ENCODE measurements at regions of chr3 and their contacts with region 1.

Region 1: GRCh38 chr3:129942296-129942695 is 32.2 kb upstream of the TRH start:
- DNase-seq: peak; percentile 75
- H3K4me3 ChIP-seq: no peak overlapping the region
- H3K27ac ChIP-seq: no peak overlapping the region
- H3K4me1 ChIP-seq: no peaks in the 10 kb centered on the region
- H3K27me3 ChIP-seq: peaks cover 4 to 7% of the 10 kb centered on the region in 2 experiments
- CTCF ChIP-seq: peak; percentile 59 to 85
- POLR2A ChIP-seq: no peak

Region 2: DNA sequence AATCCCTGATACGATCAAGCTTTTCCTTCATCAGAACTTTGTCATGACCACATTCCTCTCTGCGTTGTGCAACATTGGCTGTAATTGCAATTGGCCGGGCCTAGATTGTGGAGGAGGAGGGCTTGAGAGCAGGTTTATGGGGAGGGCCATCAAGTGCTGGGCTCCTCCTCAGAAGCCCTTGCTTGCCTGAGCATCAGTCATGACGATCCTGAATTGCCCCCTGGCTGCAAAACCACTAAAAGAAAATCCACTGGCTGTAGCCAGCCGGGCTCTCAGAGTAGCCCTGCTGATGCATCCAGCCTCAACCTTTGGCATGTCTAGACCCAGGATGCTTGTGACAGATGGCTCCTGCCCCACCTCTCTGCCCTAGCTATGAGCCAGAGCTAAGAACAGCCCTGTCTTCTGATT is 18.8 kb after region 1 on chr3:
- CTCF ChIA-PET with region 1: interaction called, 17 read pairs
- POLR2A ChIA-PET with region 1: no interaction called
- dilution Hi-C with region 1: no loop called
- intact Hi-C with region 1: no loop called
- DNase-seq: no peak
- H3K4me3 ChIP-seq: no peak overlapping the region
- H3K27ac ChIP-seq: no peak overlapping the region
- H3K4me1 ChIP-seq: no peaks in the 10 kb centered on the region
- H3K27me3 ChIP-seq: peaks cover 2 to 3% of the 10 kb centered on the region in 2 experiments
- CTCF ChIP-seq: no peak
- POLR2A ChIP-seq: no peak

Region 3: DNA sequence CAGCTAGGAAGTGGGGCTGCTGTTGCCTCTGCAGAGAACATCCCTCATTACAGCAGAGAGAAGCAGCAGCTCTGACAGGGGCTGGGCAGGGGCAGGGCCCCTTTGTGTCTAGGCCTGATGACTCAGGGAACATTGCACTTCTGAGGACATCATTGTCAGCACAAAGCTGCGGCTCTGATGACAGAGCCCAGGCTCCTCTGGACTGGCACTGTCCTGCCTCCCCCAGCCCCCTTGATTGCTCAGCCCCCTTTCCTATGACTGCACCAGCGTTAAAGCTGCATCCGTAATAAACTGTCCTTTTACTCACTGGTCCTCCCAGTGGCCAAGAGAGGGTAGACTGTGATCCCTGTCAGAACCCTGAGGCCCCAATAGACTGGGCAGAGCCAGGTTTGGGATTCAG is 50.5 kb after region 1 on chr3:
- CTCF ChIA-PET with region 1: interaction called, 22 read pairs
- POLR2A ChIA-PET with region 1: no interaction called
- dilution Hi-C with region 1: no loop called
- intact Hi-C with region 1: no loop called
- DNase-seq: no peak
- H3K4me3 ChIP-seq: no peak overlapping the region
- H3K27ac ChIP-seq: no peak overlapping the region
- H3K4me1 ChIP-seq: no peaks in the 10 kb centered on the region
- H3K27me3 ChIP-seq: peaks cover 11 to 25% of the 10 kb centered on the region in 2 experiments
- CTCF ChIP-seq: peak in 1 of 2 donors; percentile 37
- POLR2A ChIP-seq: no peak

Region 4: GRCh38 chr3:130093741-130094391 is 151.6 kb after region 1 on chr3:
- CTCF ChIA-PET with region 1: interaction called, 103 read pairs
- POLR2A ChIA-PET with region 1: no interaction called
- dilution Hi-C with region 1: no loop called
- intact Hi-C with region 1: loop called (anchors 2 kb)
- DNase-seq: no peak
- H3K4me3 ChIP-seq: no peak overlapping the region
- H3K27ac ChIP-seq: no peak overlapping the region
- H3K4me1 ChIP-seq: no peaks in the 10 kb centered on the region
- H3K27me3 ChIP-seq: no peaks in the 10 kb centered on the region
- CTCF ChIP-seq: no peak
- POLR2A ChIP-seq: no peak

Region 5: GRCh38 chr3:130111185-130111864 is 169.0 kb after region 1 on chr3:
- CTCF ChIA-PET with region 1: interaction called, 78 read pairs
- POLR2A ChIA-PET with region 1: no interaction called
- dilution Hi-C with region 1: no loop called
- intact Hi-C with region 1: no loop called
- DNase-seq: peak; percentile 98
- H3K4me3 ChIP-seq: peak overlapping the region; percentile 38 to 62 (median 61)
- H3K27ac ChIP-seq: peak overlapping the region; percentile 65
- H3K4me1 ChIP-seq: peaks cover 4% of the 10 kb centered on the region
- H3K27me3 ChIP-seq: no peaks in the 10 kb centered on the region
- CTCF ChIP-seq: no peak
- POLR2A ChIP-seq: peak; percentile 65

Measured in endothelial cell of umbilical vein (primary cell).